B cell (primary cell): ENCODE measurements at regions of chr15 and their contacts with region 1.

Region 1: DNA sequence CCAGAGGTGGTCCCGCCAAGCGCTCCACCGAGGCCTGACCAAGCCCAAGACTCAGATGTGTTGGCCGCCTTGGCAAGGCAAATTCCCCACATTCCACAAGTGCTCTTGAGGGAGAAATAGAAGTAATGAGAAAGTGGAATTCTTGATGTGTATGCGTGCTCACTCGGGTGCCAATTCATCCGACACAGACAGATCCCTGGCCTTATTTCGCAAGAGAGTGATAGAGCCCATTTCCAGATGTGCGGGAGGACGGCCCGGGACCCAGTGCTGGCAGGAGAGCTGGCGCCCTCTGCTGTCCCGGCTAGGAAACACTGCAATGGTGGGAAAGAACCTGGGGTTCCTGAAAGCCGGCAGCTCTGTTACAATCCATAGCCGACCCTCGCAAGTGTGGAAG is 76.0 kb downstream of the HMG20A start:
- DNase-seq: peak; percentile 78
- ATAC-seq: peak; percentile 75
- H3K4me3 ChIP-seq: no peak overlapping the region
- H3K4me3 Mint-ChIP-seq: no peak overlapping the region
- H3K27ac ChIP-seq: no peak overlapping the region
- H3K27ac Mint-ChIP-seq: no peak overlapping the region
- H3K4me1 ChIP-seq: peaks cover 19 to 27% of the 10 kb centered on the region in 2 donors
- H3K4me1 Mint-ChIP-seq: peaks cover 30% of the 10 kb centered on the region
- H3K27me3 ChIP-seq: no peaks in the 10 kb centered on the region
- H3K27me3 Mint-ChIP-seq: no peaks in the 10 kb centered on the region
- CTCF ChIP-seq: peak; percentile 90

Region 2: GRCh38 chr15:77107531-77108355 is 389.0 kb before region 1 on chr15:
- CTCF ChIA-PET with region 1: interaction called, 36 read pairs
- POLR2A ChIA-PET with region 1: no interaction called
- intact Hi-C with region 1: loop called (anchors 1 kb)
- DNase-seq: peak; percentile 60
- ATAC-seq: peak; percentile 51
- H3K4me3 ChIP-seq: no peak overlapping the region
- H3K4me3 Mint-ChIP-seq: no peak overlapping the region
- H3K27ac ChIP-seq: no peak overlapping the region
- H3K27ac Mint-ChIP-seq: no peak overlapping the region
- H3K4me1 ChIP-seq: peaks cover 3 to 14% of the 10 kb centered on the region in 2 donors
- H3K4me1 Mint-ChIP-seq: peaks cover 11% of the 10 kb centered on the region
- H3K27me3 ChIP-seq: no peaks in the 10 kb centered on the region
- H3K27me3 Mint-ChIP-seq: no peaks in the 10 kb centered on the region
- CTCF ChIP-seq: peak; percentile 64

Region 3: DNA sequence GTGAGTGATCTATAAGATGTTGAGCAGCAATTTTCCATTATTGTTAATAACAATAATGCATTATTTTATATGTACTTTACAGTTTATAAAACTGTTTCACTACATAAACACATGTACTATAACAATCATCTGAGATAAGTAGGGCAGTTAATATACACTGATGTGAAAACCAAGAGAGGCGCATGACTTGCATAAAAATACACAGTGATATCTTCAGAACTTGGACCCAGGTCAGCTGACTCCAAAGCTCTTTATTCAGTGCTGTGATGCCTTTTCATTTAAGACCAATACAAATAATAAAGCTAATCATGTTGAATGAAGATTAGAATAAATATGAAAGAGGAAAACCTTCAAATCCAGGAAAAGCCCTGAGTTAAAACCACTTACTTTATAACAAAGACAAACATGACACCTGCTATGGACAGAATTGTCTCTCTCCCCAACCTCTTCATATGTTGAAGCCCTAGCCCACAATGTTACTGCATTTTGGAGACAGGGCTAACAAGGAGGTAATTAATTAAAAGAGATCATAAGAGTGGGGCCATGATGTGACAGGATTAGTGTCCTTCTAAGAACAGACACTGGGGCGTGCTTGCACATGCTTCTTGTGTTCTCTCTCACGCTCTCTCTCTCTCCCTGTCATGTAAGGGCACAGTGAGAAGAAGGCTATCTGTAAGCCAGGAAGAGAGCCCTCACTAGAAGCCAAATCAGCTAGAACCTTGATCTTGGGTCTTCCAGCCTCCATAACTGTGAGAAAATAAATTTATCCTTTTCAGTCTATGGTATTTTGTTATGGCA is 370.0 kb before region 1 on chr15:
- CTCF ChIA-PET with region 1: interaction called, 208 read pairs
- POLR2A ChIA-PET with region 1: no interaction called
- intact Hi-C with region 1: no loop called
- DNase-seq: no peak
- ATAC-seq: no peak
- H3K4me3 ChIP-seq: no peak overlapping the region
- H3K4me3 Mint-ChIP-seq: no peak overlapping the region
- H3K27ac ChIP-seq: no peak overlapping the region
- H3K27ac Mint-ChIP-seq: no peak overlapping the region
- H3K4me1 ChIP-seq: peaks cover 24 to 25% of the 10 kb centered on the region in 2 donors
- H3K4me1 Mint-ChIP-seq: peaks cover 31% of the 10 kb centered on the region
- H3K27me3 ChIP-seq: no peaks in the 10 kb centered on the region
- H3K27me3 Mint-ChIP-seq: no peaks in the 10 kb centered on the region
- CTCF ChIP-seq: no peak

Region 4: DNA sequence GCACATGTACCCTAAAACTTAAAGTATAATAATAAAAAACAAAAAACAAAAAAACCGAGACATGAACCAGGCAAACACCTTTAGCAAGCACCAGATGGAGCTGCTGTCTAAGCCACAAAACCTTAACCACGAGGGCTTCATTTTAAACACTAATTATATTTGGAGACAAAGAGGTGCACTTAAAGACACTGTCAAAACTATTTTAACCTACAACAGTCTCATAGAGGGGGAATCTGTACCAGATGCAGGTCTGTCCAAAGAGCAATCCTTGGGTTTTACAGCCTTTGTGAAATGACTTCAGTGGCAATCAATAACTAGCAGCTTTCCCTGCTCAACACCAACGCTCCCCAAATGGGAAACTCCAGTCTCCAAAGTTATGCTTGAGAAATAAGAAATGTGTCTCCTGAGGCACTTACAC is 310.1 kb before region 1 on chr15:
- CTCF ChIA-PET with region 1: interaction called, 158 read pairs
- POLR2A ChIA-PET with region 1: no interaction called
- intact Hi-C with region 1: loop called (anchors 1 kb)
- DNase-seq: peak; percentile 60
- ATAC-seq: no peak
- H3K4me3 ChIP-seq: no peak overlapping the region
- H3K4me3 Mint-ChIP-seq: no peak overlapping the region
- H3K27ac ChIP-seq: peak overlapping the region; percentile 79 to 80
- H3K27ac Mint-ChIP-seq: peak overlapping the region; percentile 53
- H3K4me1 ChIP-seq: peaks cover 76% of the 10 kb centered on the region in 2 donors
- H3K4me1 Mint-ChIP-seq: peaks cover 66% of the 10 kb centered on the region
- H3K27me3 ChIP-seq: no peaks in the 10 kb centered on the region
- H3K27me3 Mint-ChIP-seq: no peaks in the 10 kb centered on the region
- CTCF ChIP-seq: peak; percentile 76

Region 5: DNA sequence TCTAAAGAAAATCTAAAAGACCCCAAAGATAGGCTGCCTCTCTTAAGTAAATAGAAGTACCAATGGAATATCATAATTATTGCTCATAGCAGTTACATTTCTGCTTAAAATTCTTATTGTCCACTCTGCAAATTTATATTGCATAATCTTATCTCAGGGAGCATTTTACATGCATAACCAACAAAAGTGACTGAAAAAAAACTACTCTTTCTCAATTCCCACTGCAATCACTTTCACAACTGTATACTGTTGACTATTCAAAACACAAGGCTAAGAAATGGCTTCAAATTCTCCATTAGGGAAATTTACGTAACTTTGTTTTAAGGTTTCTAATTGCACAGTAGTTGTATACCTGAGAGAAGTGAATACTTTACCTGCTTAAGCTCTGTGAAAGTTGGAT is 19.7 kb before region 1 on chr15:
- CTCF ChIA-PET with region 1: interaction called, 10 read pairs
- POLR2A ChIA-PET with region 1: no interaction called
- intact Hi-C with region 1: no loop called
- DNase-seq: no peak
- ATAC-seq: no peak
- H3K4me3 ChIP-seq: no peak overlapping the region
- H3K4me3 Mint-ChIP-seq: no peak overlapping the region
- H3K27ac ChIP-seq: no peak overlapping the region
- H3K27ac Mint-ChIP-seq: no peak overlapping the region
- H3K4me1 ChIP-seq: no peaks in the 10 kb centered on the region
- H3K4me1 Mint-ChIP-seq: no peaks in the 10 kb centered on the region
- H3K27me3 ChIP-seq: no peaks in the 10 kb centered on the region
- H3K27me3 Mint-ChIP-seq: no peaks in the 10 kb centered on the region
- CTCF ChIP-seq: no peak